Lower leg skin (tissue), 4 donors: ENCODE measurements at regions of chr12 and their contacts with region 1.

Region 1: DNA sequence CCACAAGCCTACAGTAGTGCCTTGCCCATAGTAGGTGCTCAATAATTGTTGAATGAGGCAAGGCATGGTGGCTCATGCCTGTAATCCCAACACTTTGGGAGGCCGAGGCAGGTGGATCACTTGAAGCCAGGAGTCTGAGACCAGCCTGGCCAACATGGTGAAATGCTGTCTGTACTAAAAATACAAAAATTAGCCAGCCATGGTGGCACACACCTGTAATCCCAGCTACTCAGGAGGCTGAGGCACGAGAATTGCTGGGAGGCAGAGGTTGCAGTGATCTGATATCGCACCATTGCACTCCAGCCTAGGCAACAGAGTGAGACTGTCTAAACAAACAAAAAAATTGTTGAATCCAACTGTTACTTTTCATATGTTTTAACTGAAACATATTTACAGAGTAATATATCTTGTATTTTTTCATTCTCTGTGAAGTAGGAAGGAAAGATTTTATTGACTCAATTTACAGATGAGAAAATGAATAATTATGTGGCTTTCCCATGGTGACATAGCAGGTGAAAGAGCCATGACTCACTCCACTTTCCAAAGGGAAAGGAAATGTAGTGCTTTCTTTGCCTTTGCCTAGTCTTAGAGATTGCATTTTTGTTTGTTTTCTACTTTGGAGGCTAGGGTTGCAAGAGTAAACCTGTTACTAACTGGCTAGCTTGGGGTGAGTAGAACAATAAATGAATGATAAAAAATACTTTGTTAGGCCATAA is 95.4 kb upstream of the SLC38A4 start:
- DNase-seq: no peak
- H3K4me3 ChIP-seq: no peak overlapping the region
- CTCF ChIP-seq: no peak
- POLR2A ChIP-seq: no peak

Region 2: GRCh38 chr12:46124848-46125619 is 796.2 kb before region 1 on chr12:
- intact Hi-C with region 1: loop called (anchors 10 kb)
- DNase-seq: peak in 1 of 2 donors; percentile 33
- H3K4me3 ChIP-seq: no peak overlapping the region
- CTCF ChIP-seq: peak in 1 of 3 donors; percentile 48
- POLR2A ChIP-seq: no peak

Region 3: GRCh38 chr12:46970636-46971035 is 49.4 kb after region 1 on chr12:
- intact Hi-C with region 1: no loop called
- DNase-seq: no peak
- H3K4me3 ChIP-seq: no peak overlapping the region
- CTCF ChIP-seq: no peak
- POLR2A ChIP-seq: no peak